ENCODE measurements at regions of chr19 and their contacts with region 1.

Region 1: GRCh38 chr19:16572332-16573211 is at the start of gene SLC35E1:
- DNase-seq: peak; percentile 96
- ATAC-seq: peak; percentile 97
- H3K4me3 Mint-ChIP-seq: peak within 1 kb of the TSS; percentile 96
- H3K27ac Mint-ChIP-seq: peak within 1 kb of the TSS; percentile 96
- H3K4me1 Mint-ChIP-seq: peaks cover 53% of the 10 kb centered on the region
- H3K27me3 Mint-ChIP-seq: no peaks in the 10 kb centered on the region
- total RNA-seq, gene SLC35E1: 51.5 to 72.1 TPM

Region 2: GRCh38 chr19:16197622-16198369 is 374.8 kb before region 1 on chr19 and contains the start of gene AP1M1:
- CTCF ChIA-PET with region 1: no interaction called
- POLR2A ChIA-PET with region 1: no interaction called
- intact Hi-C with region 1: loop called in 1 of 2 experiments (anchors 1 kb)
- DNase-seq: peak; percentile 99
- ATAC-seq: peak; percentile 95
- H3K4me3 Mint-ChIP-seq: peak within 1 kb of the TSS; percentile 83
- H3K27ac Mint-ChIP-seq: peak within 1 kb of the TSS; percentile 96
- H3K4me1 Mint-ChIP-seq: peaks cover 33% of the 10 kb centered on the region
- H3K27me3 Mint-ChIP-seq: no peaks in the 10 kb centered on the region
- total RNA-seq, gene AP1M1: 61.8 to 92.0 TPM

Region 3: GRCh38 chr19:16495982-16496612 is 76.5 kb before region 1 on chr19 and contains the starts of genes C19orf44 and CALR3:
- CTCF ChIA-PET with region 1: no interaction called
- POLR2A ChIA-PET with region 1: no interaction called
- intact Hi-C with region 1: loop called in 1 of 2 experiments (anchors 1 kb)
- DNase-seq: peak; percentile 99
- ATAC-seq: peak; percentile 99
- H3K4me3 Mint-ChIP-seq: peak within 1 kb of the TSS; percentile 89
- H3K27ac Mint-ChIP-seq: peak within 1 kb of the TSS; percentile 79
- H3K4me1 Mint-ChIP-seq: peaks cover 13% of the 10 kb centered on the region
- H3K27me3 Mint-ChIP-seq: no peaks in the 10 kb centered on the region
- total RNA-seq, gene C19orf44: 2.9 to 4.0 TPM
- total RNA-seq, gene CALR3: not detected

Region 4: GRCh38 chr19:16584248-16585141 is 11.9 kb after region 1 on chr19:
- CTCF ChIA-PET with region 1: interaction called, 9 read pairs
- POLR2A ChIA-PET with region 1: interaction called, 11 read pairs
- intact Hi-C with region 1: loop called (anchors 1 kb)
- DNase-seq: peak; percentile 94
- ATAC-seq: peak; percentile 79
- H3K4me3 Mint-ChIP-seq: peak overlapping the region; percentile 79
- H3K27ac Mint-ChIP-seq: peak overlapping the region; percentile 95
- H3K4me1 Mint-ChIP-seq: peaks cover 76% of the 10 kb centered on the region
- H3K27me3 Mint-ChIP-seq: no peaks in the 10 kb centered on the region

Region 5: GRCh38 chr19:16628183-16628983 is 55.8 kb after region 1 on chr19 and contains the start of gene MED26:
- CTCF ChIA-PET with region 1: interaction called, 4 read pairs
- POLR2A ChIA-PET with region 1: interaction called, 5 read pairs
- intact Hi-C with region 1: loop called (anchors 1 to 5 kb)
- DNase-seq: peak; percentile 98
- ATAC-seq: peak; percentile 92
- H3K4me3 Mint-ChIP-seq: peak within 1 kb of the TSS; percentile 87
- H3K27ac Mint-ChIP-seq: peak within 1 kb of the TSS; percentile 100
- H3K4me1 Mint-ChIP-seq: peaks cover 39% of the 10 kb centered on the region
- H3K27me3 Mint-ChIP-seq: no peaks in the 10 kb centered on the region
- total RNA-seq, gene MED26: 13.6 to 14.5 TPM

Measured in activated CD4-positive, alpha-beta T cell treated with anti-CD3 and anti-CD28 coated beads for 36 hours (primary cell).